ENCODE measurements at regions of chr6 and their contacts with region 1.

Region 1: DNA sequence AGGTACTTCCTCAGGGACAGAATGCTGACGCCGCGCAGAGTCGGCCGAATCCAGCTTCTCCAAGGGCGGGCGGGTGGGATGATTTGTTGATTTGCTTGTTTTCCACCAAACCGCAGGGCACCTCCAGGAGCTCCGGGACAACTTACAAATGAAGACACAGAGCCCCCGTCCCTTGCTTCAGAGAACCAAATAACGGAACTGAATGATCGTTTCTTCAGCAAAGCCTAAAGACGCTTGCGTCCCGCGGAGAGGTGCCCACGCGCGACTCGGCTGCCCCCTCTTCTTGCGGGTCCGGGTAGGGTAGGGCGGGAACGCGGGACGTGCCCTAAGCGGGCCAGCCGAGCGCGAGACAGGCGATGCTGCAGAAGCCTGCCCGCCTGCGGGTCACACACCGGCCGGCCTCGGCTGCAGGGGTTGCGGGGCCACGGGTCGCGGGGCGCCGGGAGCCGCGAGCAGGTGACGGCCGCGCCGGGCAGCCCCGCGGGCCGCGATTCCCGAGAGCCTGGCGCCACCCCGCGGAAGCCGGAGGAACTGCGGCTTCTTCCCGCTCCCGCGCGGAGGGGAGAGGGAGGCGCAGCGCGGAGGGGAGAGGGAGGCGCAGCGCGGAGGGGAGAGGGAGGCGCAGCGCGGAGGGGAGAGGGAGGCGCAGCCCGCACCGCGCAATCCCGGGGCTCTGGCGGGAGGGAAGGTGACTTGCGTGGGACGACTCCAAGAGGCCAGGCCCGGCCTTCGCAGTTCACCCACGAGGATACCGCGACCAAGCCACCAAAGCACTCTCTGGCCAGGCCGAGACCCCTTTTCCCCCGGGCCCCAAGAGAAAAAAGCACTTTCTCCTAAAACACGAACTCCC is 7.7 kb upstream of the FOXF2 start:
- DNase-seq: no peak
- H3K4me3 ChIP-seq: peak overlapping the region; percentile 12 to 18
- H3K27ac ChIP-seq: peak overlapping the region; percentile 42 to 49
- H3K4me1 ChIP-seq: no peaks in the 10 kb centered on the region
- H3K27me3 ChIP-seq: peaks cover 58% of the 10 kb centered on the region
- CTCF ChIP-seq: peak; percentile 82 to 92 (median 88)
- POLR2A ChIP-seq: no peak

Region 2: DNA sequence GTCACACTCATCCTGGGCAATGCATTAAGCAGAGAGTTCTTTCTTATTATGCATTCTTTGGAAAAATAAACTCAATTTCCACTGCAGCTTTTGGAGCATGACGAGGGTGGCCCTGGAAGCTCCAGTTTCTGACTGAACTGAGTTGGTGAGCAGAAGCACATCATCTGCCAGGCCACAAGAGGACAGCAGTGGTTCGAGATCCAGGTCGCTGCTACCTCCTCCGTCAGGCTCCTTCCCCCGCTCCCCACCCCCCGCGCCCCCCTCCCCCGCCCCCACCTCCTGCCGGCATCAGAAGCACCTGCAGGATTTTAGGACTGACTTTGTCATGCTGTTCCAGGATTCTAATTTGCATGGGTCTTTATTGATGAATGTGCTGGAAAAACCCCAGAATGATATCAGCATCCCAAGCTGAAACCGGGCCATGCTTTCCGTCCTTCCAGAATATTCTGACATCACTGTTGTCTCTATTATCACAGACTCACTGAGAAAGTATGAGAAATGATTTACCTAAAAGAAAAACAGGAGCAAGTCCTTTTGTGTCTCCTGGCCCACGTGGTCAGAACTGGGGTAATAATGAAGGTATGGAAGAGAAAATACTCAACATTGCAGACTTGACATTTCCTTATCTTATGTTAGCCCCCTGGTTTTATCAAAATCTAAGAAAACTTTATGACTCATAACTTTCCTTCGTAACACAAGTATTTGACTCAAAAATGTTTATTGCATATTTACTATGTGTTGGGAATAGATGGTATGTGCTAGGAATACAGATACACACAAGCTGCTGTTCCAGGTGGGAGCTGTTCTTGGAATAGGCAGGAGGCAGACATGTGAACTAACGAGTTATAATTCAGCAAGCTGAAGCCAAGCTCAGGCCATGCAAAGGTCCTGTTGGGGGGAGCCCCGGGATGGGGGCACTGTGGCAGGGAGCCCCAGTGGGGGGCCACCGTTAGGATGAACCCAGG is 468.6 kb before region 1 on chr6:
- intact Hi-C with region 1: loop called (anchors 2 kb)
- DNase-seq: peak; percentile 56
- H3K4me3 ChIP-seq: no peak overlapping the region
- H3K27ac ChIP-seq: no peak overlapping the region
- H3K4me1 ChIP-seq: no peaks in the 10 kb centered on the region
- H3K27me3 ChIP-seq: no peaks in the 10 kb centered on the region
- CTCF ChIP-seq: peak in 3 of 4 experiments; percentile 58 to 60 (median 58)
- POLR2A ChIP-seq: no peak

Region 3: GRCh38 chr6:1311400-1312202 is 70.1 kb before region 1 on chr6 and contains the start of gene FOXQ1:
- intact Hi-C with region 1: loop called (anchors 5 kb)
- DNase-seq: peak; percentile 89
- H3K4me3 ChIP-seq: peak within 1 kb of the TSS; percentile 50 to 56
- H3K27ac ChIP-seq: peak within 1 kb of the TSS; percentile 83 to 90
- H3K4me1 ChIP-seq: no peaks in the 10 kb centered on the region
- H3K27me3 ChIP-seq: no peaks in the 10 kb centered on the region
- CTCF ChIP-seq: peak in 1 of 4 experiments; percentile 16
- POLR2A ChIP-seq: peak; percentile 97
- total RNA-seq, gene FOXQ1: 20.3 to 38.6 TPM

Region 4: DNA sequence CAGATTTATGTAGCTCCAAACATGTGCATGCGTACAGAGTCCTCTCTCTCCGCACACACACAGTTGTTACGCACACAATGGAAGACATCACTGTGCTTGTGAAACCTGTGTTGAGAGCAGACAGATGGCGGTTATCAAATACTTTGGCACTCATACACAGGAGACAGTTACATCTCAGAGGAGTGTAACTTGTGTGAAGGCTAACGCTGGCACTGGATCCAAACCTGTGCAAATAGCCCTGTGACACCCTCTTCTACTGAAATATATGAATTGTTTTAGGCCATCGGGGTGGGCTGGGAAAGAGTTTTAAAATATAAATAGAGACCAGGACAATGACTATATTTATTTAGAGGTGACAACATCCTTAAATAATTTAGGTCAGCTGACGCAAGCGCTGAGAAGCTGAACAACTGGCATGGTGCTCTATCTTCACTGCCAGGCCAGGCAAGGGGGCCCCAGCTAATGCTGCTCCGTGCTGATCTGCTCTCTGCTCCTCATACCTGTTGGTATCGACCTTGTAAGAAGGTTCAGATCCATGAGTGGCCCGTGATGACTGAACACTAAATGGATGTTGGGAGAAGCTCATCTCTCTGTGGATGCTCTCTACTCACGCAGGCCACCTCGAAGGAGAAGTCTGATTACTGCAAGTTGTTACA is 297.5 kb after region 1 on chr6:
- intact Hi-C with region 1: no loop called
- DNase-seq: peak; percentile 24
- H3K4me3 ChIP-seq: no peak overlapping the region
- H3K27ac ChIP-seq: peak overlapping the region; percentile 31 to 32
- H3K4me1 ChIP-seq: peaks cover 7% of the 10 kb centered on the region
- H3K27me3 ChIP-seq: no peaks in the 10 kb centered on the region
- CTCF ChIP-seq: no peak
- POLR2A ChIP-seq: no peak

Measured in prostate gland (tissue), 2 donors.